Colonic mucosa (tissue), 4 donors: ENCODE measurements at regions of chr17 and their contacts with region 1.

Region 1: DNA sequence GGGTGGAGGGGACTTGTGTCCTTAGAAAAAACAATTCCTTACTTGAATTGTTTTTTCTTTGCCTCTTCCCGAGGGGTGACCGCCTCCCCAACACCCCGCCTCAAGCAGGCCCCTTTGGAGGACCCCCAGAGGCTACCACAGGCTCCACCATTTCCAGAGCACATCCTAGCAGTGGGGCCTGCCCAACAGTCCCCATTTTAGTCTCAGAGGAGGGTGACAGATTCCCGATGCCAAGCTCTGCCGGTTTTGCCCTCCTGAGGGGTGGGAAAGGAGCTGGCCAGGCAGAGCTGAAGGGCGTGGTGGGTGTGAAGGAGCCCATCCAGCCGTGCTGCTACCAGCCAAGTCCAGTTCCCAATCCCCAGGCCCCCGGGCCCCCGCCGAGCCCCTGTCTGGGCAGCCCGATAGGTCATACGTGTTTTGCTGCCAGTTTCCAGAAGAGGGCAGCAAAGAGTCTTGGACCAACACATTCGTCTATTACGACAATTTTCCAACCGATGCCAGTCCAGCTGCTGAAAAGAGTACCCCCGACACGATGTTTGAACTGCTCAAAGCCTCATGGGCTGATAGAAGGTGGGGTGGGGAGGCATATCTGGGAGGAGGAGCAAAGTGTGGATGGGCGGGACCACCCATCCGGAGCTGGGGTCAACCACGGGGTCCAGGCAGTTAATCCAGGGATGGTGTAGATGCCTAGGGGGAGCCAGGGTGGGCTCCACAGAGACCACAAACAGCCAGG is 18.8 kb upstream of the GAA start:
- DNase-seq: peak; percentile 66
- H3K4me3 ChIP-seq: no peak overlapping the region
- H3K27ac ChIP-seq: no peak overlapping the region
- H3K4me1 ChIP-seq: no peaks in the 10 kb centered on the region
- H3K27me3 ChIP-seq: no peaks in the 10 kb centered on the region
- CTCF ChIP-seq: peak; percentile 72

Region 2: DNA sequence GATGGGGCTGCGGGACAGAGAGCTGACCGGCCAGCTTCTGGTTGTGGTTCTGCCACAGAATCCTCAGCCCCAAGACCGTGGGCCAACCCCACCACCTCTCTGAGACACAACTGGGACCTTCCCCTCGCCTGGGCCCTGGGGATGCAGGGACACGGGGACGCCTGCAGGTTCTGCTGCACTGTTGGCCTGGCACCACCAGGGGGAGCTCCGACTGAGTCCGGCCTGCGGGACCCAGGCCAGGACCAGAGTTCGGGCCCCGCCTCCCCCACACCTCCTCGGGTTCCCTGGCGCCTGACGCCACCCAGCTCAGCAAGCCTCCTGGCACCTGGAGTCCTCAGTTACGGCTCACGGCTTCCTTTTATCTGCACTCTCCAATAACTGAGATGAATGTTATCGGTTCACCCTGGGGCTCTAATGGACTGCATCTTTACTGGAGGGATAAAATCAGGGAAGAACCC is 74.2 kb before region 1 on chr17:
- intact Hi-C with region 1: loop called (anchors 5 kb)
- DNase-seq: peak; percentile 88
- H3K4me3 ChIP-seq: no peak overlapping the region
- H3K27ac ChIP-seq: no peak overlapping the region
- H3K4me1 ChIP-seq: peaks cover 4% of the 10 kb centered on the region
- H3K27me3 ChIP-seq: no peaks in the 10 kb centered on the region
- CTCF ChIP-seq: peak; percentile 98